Left cardiac atrium (tissue), 4 donors: ENCODE measurements at regions of chr12 and their contacts with region 1.

Region 1: DNA sequence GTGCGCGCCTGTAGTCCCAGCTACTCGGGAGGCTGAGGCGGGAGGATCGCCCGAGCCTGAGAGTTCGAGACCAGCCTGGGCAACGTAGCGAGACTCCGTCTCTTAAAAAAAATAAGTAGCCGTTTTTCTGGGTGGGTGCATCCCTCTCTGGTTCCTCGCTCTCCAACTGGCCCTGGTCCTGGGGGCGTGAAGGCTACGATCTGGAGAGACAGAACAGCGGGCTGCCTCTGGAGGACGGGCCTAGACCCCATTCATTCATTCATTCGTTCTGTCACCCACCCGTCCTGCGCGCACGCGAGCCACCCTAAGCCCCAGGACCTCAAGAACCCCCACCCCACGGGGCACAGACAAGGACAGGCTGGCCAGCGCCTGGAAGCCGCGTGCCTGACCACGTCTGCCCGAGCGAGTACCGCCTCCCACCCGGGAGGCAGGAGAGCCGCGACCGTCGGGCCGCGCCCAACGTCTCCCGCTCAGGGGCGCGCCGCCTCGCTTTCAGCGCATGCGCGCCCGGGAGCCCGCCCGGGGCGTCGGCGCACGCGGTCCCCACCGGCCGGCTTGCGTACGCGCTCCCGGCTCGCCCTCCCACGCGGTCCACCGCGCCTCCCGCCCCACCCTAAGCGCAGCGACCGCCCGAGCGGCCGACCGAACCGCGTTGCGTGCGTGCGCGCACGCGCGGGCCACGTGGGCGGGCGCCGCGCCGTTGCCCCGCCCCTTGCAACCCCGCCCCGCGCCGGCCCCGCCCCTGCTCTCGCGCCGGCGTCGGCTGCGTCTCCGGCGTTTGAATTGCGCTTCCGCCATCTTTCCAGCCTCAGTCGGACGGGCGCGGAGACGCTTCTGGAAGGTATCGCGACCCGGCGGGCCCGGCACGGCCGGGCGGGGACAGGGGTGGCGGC is at the start of gene RAN:
- DNase-seq: peak; percentile 95
- ATAC-seq: peak; percentile 89 to 94
- total RNA-seq, gene RAN: 306 to 467 TPM

Region 2: DNA sequence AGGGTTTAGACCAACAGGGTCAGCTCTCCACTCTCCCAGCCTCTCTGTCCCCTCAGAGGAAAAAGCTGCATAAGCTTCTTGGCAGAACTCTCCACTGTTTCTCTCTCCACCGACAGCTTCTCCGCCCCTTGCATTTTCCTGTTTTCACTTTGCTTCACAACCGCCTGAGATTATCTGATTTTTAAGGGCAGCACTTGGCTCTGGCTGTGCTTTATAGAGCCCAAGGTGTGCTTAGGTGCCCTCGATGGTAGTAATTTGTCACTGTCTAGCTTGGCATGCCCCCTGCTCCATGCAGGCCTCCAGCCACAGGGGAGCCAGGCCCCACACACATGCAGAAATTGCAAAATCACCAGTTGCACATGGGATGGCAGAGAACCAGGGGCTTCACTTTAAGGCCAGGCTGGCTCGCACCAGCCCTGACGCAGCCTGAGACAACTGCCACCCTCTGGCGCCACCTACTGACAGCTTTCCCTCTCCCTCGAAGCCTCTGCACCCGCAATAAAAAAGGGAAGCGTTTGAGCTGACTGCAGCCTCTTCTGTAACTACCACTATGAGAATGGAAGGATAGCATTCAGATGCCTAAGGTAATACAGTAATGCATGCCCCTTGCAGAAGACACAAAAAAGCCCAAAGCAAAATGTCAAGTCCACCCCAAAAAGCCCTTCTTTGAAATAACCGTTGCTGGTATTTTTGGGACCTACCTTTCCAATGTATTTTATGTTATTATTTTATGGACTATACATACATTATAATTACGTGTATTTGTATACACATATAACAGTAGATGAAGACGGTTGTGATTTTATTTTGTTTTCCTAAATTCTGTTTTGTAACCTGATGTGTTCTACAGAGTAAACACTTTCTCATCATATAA is 123.4 kb before region 1 on chr12:
- intact Hi-C with region 1: no loop called
- DNase-seq: peak; percentile 85
- ATAC-seq: peak; percentile 95 to 98

Region 3: DNA sequence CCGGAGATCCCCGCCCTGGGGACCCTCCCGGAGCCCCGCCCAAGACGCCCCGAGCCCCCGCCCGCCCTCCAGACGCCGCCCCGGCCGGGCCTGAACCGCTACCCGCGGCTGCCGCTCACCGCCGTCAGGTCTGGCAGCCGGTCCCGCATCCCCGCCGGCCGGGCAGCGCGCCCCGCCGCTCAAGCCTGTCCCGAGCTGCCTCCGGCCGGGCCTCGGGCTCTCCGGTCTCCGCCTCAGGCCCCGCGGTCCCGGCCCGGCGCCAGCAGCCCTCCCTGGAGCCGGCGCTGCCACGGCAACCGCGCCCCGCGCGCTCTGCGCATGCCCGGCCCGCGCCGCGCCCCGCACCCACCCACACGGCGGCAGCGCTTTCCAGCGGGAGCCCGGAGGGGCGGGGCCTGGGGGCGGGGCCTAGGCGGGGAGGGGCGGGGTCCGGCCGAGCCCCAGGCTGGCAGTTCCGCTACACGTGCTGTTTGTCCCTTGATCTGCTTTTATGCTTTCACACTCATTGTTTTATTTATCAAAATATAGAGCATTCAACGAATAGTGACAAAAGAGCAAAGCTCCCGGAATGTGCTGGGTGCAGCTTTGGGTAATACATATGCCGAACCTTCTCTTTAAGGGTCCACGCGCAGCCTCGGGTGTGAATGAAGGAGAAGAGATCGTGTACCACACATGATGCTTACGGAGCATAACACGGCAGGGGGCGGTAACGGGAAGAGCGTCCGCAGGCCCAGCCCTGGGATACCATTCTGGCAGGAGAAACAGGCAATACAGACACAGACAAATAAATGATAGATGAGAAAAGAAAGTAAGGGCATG is 32.4 kb before region 1 on chr12 and contains the start of gene STX2:
- intact Hi-C with region 1: loop called in 1 of 2 experiments (anchors 5 kb)
- DNase-seq: peak; percentile 90
- ATAC-seq: peak; percentile 97 to 99
- total RNA-seq, gene STX2: 19.1 to 34.4 TPM